Kidney (tissue), 22 donors: ENCODE measurements at regions of chr17 and their contacts with region 1.

Region 1: DNA sequence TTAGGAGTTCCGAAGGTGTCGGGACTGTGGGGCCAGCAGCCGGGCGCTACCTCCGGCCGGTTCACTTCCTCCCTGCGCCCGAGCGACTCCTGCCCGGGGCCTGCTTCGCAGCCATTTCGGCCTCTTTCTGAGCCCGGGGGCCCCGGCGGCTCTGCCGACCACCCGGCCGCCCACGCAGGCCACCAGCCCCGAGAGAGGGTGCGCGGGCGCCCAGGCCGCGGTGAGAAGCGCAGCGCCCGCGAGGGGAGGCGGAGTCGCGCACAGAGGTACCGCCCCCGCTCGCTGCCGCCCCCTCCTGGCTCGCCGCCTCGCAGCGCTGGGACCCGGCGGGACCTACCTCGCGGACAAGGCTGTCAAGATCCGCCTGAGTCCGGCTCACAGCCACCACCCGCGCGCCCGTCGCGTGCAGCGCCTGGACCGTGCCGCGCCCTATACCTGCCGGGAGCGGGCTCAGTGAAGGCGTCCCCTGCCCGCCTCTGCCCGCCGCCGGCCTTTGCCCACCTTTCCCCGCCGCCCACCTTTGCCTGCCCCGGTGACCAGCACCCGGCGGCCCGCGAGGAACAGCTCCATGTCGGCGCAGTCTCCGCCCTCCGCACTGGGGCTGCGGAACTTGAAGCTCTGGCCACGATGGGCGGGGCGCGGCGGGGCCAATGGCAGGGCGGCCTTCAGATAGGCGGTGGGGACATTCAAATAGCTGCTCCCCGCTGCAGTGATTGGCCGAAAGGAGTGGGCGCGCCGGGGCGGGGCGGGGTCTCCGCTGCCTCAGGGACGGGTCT is at the start of gene DCXR:
- DNase-seq: peak; percentile 97 to 99 (median 98)
- H3K4me3 ChIP-seq: peak within 1 kb of the TSS; percentile 50 to 84 (median 69)
- H3K27ac ChIP-seq: peak within 1 kb of the TSS; percentile 96 to 99
- H3K4me1 ChIP-seq: peaks cover 3 to 17% (median 5%) of the 10 kb centered on the region in 3 donors
- H3K27me3 ChIP-seq: no peaks in the 10 kb centered on the region
- CTCF ChIP-seq: peak; percentile 79
- total RNA-seq, gene DCXR: 102 TPM

Region 2: GRCh38 chr17:82153745-82154375 is 116.6 kb after region 1 on chr17:
- intact Hi-C with region 1: loop called (anchors 10 kb)
- DNase-seq: peak; percentile 79 to 88 (median 84)
- H3K4me3 ChIP-seq: no peak overlapping the region
- H3K27ac ChIP-seq: no peak overlapping the region
- H3K4me1 ChIP-seq: no peaks in the 10 kb centered on the region
- H3K27me3 ChIP-seq: no peaks in the 10 kb centered on the region
- CTCF ChIP-seq: peak; percentile 94